Uterus (tissue), 4 donors: ENCODE measurements at regions of chrX and their contacts with region 1.

Region 1: DNA sequence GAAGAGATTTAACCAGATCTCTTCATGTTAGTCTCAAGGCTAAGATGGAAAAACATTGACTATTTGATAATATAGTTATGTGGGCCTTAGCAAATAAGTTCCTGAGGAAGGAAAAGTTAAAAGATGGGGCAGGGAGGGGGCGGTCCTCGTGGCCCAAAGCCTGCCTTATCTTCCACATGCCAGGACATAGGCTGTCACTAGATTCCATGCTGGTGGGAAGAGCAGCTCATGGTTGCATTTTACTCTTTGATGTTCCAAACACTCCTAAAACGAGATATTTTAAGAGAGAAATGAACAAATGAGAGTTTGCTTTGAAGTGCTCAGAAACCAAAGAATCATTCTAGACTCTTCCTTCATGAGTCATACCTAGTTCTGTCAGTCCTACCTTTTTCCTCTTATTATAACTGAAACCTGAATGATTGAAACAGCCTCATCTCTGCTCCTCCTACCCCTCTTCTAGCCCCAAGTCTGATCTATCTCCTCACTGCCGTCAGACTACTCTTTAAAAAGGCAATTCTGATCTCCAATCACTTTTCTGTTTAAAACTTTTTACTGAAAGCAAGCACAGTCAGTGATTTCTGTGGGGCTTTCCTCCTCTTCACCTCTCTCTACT is 25.1 kb downstream of the RAB9B start:
- DNase-seq: no peak
- H3K4me3 ChIP-seq: no peak overlapping the region
- H3K27ac ChIP-seq: no peak overlapping the region
- H3K4me1 ChIP-seq: no peaks in the 10 kb centered on the region
- H3K27me3 ChIP-seq: no peaks in the 10 kb centered on the region
- CTCF ChIP-seq: no peak
- POLR2A ChIP-seq: no peak

Region 2: DNA sequence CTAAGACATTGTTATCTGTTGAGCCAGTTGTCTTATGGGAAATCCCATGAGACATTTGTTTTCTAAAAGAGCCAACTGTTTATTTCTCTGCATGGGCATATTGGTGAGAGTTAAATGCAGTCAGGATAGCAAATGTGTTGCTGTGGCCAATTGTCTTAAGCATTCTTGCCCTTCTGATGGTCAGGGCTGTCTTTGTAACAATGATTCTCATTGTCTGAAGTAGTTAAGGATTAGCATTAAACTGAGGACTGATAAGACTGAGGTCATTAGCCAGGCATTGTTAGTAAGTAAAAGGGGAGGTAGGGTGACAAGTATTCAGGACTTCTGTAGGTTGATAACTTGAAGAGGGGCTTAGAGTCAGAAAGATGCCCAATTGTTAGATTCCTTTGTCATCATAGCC is 109.3 kb before region 1 on chrX:
- intact Hi-C with region 1: loop called (anchors 10 kb)
- DNase-seq: no peak
- H3K4me3 ChIP-seq: no peak overlapping the region
- H3K27ac ChIP-seq: no peak overlapping the region
- H3K4me1 ChIP-seq: no peaks in the 10 kb centered on the region
- H3K27me3 ChIP-seq: no peaks in the 10 kb centered on the region
- CTCF ChIP-seq: no peak
- POLR2A ChIP-seq: no peak

Region 3: DNA sequence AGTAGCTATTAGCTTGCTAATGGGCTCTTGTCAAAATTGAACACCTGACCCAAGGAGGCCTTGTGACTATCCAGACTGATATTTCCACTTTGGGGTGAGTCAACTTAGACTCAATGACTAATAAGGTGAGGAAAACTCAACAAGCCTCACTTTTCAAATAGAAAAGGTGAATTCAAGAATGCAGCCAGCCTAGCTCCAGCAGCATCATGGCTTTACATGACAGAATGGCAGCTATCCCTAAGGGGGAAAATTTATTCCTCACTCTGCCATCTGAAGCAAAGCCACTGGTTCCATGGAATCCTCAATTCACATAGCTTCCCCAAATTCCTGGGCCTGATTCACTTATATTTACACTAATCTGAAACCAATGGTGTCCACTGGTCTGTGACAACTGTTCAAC is 54.2 kb after region 1 on chrX:
- intact Hi-C with region 1: no loop called
- DNase-seq: no peak
- H3K4me3 ChIP-seq: no peak overlapping the region
- H3K27ac ChIP-seq: no peak overlapping the region
- H3K4me1 ChIP-seq: no peaks in the 10 kb centered on the region
- H3K27me3 ChIP-seq: peaks cover 0 to 2% of the 10 kb centered on the region in 2 donors
- CTCF ChIP-seq: no peak
- POLR2A ChIP-seq: no peak

Region 4: GRCh38 chrX:103878466-103879122 is 71.6 kb after region 1 on chrX:
- intact Hi-C with region 1: no loop called
- DNase-seq: no peak
- H3K4me3 ChIP-seq: no peak overlapping the region
- H3K27ac ChIP-seq: no peak overlapping the region
- H3K4me1 ChIP-seq: no peaks in the 10 kb centered on the region
- H3K27me3 ChIP-seq: no peaks in the 10 kb centered on the region
- CTCF ChIP-seq: no peak
- POLR2A ChIP-seq: no peak